ENCODE measurements at regions of chr4 and their contacts with region 1.

Region 1: DNA sequence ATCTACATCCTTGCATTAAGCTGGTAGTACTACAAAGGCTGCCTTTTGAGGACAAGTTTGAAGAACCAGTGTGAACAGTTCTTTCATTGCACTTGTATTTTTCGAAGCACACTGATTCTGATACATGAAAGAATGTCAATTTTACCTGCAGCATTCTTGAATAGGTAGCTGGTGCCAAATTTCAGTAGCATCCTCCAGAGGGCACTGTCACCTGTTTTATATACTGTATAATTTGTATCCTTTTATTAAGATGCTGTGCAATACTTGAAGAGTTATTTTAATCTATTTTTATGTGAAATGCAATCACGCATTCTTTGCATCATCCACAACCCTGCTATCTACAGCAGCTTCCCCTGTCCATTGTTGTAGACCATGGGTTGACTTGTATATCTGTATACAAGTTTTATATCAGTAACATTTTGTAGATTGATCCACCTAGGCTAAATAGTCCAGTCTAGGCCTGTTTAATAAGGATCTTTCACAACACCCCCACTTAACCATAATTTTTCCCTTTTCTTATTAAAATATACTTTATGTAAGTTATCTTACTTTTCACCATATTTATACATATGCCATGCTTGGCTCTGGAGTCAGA is 325.7 kb downstream of the PCDH7 start:
- DNase-seq: no peak
- ATAC-seq: peak; percentile 61

Region 2: GRCh38 chr4:31667686-31668085 is 621.9 kb after region 1 on chr4:
- intact Hi-C with region 1: loop called (anchors 10 kb)
- DNase-seq: no peak
- ATAC-seq: no peak

Measured in Right ventricle myocardium superior (tissue), 1 donor.